Breast epithelium (tissue), 4 donors: ENCODE measurements at regions of chr15 and their contacts with region 1.

Region 1: GRCh38 chr15:62799919-62800318 is 242.6 kb upstream of the TPM1 start:
- DNase-seq: no peak
- H3K4me3 ChIP-seq: no peak overlapping the region
- H3K27ac ChIP-seq: no peak overlapping the region
- H3K4me1 ChIP-seq: no peaks in the 10 kb centered on the region
- H3K27me3 ChIP-seq: no peaks in the 10 kb centered on the region
- CTCF ChIP-seq: no peak
- POLR2A ChIP-seq: no peak

Region 2: DNA sequence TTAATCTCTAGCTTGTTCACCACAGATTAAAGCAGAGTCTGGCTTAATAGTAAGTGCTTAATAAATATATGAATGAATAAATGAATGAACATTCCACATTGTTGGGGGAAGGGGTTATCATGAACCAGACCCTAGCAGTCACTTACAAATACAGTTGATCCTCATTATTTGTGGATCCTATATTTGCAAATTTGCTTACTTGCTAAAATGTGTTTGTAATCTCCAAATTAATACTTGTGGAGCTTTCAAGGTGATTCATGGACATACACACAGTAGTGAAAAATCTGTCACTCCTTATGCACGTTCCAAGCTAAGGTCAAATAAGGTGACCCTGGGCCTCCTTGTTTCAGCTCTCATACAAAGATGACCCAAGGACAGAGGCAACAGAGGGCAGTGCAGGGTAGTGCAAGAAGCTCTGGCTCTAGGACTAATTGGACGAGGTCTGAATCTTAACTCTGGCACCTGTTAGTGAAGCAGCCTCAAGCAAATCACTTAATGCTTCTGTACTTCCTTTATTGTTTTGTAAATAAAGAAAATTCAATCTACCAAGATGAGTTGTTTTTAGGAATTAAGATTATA is 522.0 kb before region 1 on chr15:
- intact Hi-C with region 1: no loop called
- DNase-seq: no peak
- H3K4me3 ChIP-seq: no peak overlapping the region
- H3K27ac ChIP-seq: no peak overlapping the region
- H3K4me1 ChIP-seq: no peaks in the 10 kb centered on the region
- H3K27me3 ChIP-seq: no peaks in the 10 kb centered on the region
- CTCF ChIP-seq: no peak
- POLR2A ChIP-seq: no peak

Region 3: DNA sequence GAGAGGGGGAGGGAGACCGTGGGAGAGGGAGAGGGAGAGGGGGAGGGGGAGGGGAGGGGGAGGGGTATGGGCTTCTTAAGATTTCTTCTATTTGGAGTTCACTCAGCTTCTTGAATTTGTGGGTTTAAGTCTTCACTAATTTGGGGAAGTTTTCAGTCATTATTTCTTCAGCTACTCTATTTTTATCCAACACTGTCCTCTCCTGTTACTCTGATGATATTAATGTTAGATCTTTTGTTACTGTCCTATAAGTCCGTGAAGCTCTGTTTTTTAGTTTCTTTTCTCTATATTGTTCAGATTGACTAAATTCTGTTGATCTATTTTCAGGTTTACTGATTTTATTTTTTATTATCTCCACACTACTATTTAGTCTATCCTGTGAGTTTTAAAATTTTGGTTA is 108.9 kb before region 1 on chr15:
- intact Hi-C with region 1: no loop called
- DNase-seq: no peak
- H3K4me3 ChIP-seq: no peak overlapping the region
- H3K27ac ChIP-seq: no peak overlapping the region
- H3K4me1 ChIP-seq: no peaks in the 10 kb centered on the region
- H3K27me3 ChIP-seq: no peaks in the 10 kb centered on the region
- CTCF ChIP-seq: no peak
- POLR2A ChIP-seq: no peak

Region 4: GRCh38 chr15:64629063-64629462 is 1829.1 kb after region 1 on chr15:
- intact Hi-C with region 1: loop called (anchors 5 kb)
- DNase-seq: no peak
- H3K4me3 ChIP-seq: no peak overlapping the region
- H3K27ac ChIP-seq: no peak overlapping the region
- H3K4me1 ChIP-seq: no peaks in the 10 kb centered on the region
- H3K27me3 ChIP-seq: no peaks in the 10 kb centered on the region
- CTCF ChIP-seq: no peak
- POLR2A ChIP-seq: no peak